Activated T-helper 1 cell treated with anti-CD3 and anti-CD28 coated beads, Interleukin-12 subunit alpha, Interleukin-12 subunit beta, Interleukin-2, Interleukin-4 antibody, amounts not matched to agents 30 ng/mL and 10 ng/mL and 1 ng/mL, durations not matched to agents 14 hours and 24 hours and 36 hours (primary cell): ENCODE measurements at regions of chr12 and their contacts with region 1.

Region 1: GRCh38 chr12:94532490-94533422 is 73.1 kb upstream of the CEP83 start:
- DNase-seq: peak; percentile 59
- H3K4me3 Mint-ChIP-seq: no peak overlapping the region
- H3K27ac Mint-ChIP-seq: no peak overlapping the region
- H3K4me1 Mint-ChIP-seq: peaks cover 17% of the 10 kb centered on the region
- H3K27me3 Mint-ChIP-seq: peaks cover 10% of the 10 kb centered on the region

Region 2: GRCh38 chr12:93502802-93503623 is 1029.7 kb before region 1 on chr12:
- intact Hi-C with region 1: loop called (anchors 2 kb)
- DNase-seq: peak; percentile 42
- H3K4me3 Mint-ChIP-seq: no peak overlapping the region
- H3K27ac Mint-ChIP-seq: no peak overlapping the region
- H3K4me1 Mint-ChIP-seq: peaks cover 32% of the 10 kb centered on the region
- H3K27me3 Mint-ChIP-seq: no peaks in the 10 kb centered on the region

Region 3: DNA sequence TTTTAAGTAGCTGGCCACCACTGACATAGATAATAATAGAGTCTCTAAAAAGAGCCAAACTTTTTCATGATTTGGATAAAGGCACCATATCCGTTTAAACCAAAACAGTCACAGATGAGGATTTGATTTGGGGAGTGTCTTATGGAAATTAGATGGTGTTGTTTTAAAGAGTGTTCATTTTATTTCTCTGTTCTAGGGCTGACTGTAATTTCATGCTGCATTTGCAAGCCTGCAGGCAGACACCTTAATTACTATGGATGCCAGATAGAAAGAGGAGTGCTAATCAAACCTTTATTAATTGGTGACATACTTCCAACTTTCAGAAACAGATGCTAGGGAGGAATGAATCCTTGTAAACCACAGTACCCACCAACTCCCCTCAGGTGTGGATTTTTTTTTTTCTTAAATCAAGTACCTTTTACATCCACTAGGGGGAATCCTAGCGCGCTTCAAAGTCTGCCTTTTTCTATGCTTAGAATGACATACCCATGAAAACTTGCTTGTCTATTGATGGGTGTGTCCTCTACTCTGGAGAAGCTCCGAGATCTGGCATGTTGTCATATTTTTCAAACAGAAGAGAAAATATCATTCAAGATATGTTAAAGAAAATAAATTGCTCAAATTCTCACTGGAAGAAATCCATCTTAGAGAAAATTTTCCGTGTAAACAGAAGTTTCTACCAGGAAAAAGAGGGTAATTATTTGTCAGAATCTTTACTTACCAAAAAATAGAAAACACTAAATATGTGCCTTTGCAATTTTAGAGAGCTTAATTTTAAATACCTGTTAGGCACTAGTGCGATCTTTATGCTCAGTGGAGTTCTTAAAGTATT is 398.6 kb before region 1 on chr12:
- intact Hi-C with region 1: loop called (anchors 1 kb)
- DNase-seq: peak; percentile 24
- H3K4me3 Mint-ChIP-seq: no peak overlapping the region
- H3K27ac Mint-ChIP-seq: no peak overlapping the region
- H3K4me1 Mint-ChIP-seq: peaks cover 6% of the 10 kb centered on the region
- H3K27me3 Mint-ChIP-seq: peaks cover 10% of the 10 kb centered on the region

Region 4: DNA sequence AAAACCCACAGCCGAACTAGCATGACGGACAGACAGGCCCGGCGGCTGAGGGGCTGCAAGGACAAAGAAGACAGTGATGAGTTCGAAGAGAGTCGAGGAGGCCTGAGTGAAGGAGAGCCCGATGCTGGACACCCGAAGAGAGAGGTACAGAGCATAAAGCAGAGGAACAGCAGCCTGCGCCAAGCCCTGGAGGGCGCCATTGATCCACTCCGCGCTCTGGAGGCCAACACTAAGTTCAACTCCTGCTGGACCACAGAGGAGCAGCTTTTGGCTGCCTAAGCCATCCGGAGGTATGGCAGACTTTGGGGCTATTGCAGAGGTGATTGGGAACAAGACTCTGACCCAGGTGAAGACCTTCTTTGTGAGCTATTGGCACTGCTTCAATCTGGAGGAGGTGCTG is 392.2 kb before region 1 on chr12:
- intact Hi-C with region 1: loop called (anchors 1 kb)
- DNase-seq: peak; percentile 40
- H3K4me3 Mint-ChIP-seq: no peak overlapping the region
- H3K27ac Mint-ChIP-seq: no peak overlapping the region
- H3K4me1 Mint-ChIP-seq: peaks cover 8% of the 10 kb centered on the region
- H3K27me3 Mint-ChIP-seq: peaks cover 18% of the 10 kb centered on the region

Region 5: DNA sequence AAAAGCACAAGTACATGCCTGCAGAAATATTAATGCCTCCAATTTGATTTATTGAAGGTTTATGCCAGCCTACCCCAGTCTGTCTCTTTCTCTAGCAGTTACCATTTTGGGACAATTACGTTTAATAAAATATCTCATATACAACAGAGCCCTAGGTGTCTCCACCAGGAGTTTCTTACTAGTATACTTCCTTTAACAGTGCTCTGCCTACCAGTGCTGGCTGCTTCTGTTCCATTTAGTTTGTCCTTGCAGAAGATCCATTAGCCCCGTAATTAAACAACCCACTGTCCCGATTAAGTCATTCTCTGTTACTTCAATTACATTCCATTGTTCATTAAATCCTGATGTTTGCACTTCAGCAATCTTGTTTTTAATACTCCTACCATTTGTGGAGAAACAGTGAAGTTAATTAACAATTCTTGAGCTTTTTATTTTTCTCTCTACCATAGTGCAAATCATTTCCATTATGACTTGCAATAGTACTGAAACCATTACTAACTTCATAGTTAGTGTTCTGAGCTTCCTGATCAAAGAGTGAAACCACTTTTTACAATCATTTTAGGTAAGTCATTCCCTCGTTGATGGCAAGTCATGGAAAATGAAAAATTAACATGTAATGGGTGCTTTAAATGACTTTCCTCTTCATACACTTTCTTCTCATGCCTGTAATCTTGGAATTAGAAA is 263.3 kb before region 1 on chr12:
- intact Hi-C with region 1: loop called (anchors 5 kb)
- DNase-seq: no peak
- H3K4me3 Mint-ChIP-seq: peak overlapping the region; percentile 43
- H3K27ac Mint-ChIP-seq: peak overlapping the region; percentile 72
- H3K4me1 Mint-ChIP-seq: peaks cover 72% of the 10 kb centered on the region
- H3K27me3 Mint-ChIP-seq: no peaks in the 10 kb centered on the region

Region 6: DNA sequence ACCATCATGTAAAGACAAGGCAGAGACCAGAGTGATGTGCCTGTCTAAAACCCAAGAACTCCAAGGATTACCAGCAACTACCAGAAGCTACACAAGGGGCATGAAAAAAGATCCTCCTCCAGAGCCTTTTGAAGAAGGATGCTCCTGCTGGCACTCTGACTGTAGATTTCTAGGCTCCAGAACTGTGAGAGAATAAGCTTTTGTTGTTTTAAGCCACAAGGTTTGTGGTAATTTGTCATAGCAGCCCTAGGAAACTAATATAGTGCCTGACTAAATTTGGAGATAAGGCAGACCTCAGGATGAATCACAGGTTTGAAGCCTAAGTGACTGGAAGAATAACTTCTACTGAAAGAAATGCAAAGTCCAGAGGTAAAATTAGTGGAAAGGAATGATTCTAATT is 206.0 kb before region 1 on chr12:
- intact Hi-C with region 1: loop called (anchors 2 kb)
- DNase-seq: no peak
- H3K4me3 Mint-ChIP-seq: no peak overlapping the region
- H3K27ac Mint-ChIP-seq: peak overlapping the region; percentile 51
- H3K4me1 Mint-ChIP-seq: peaks cover 29% of the 10 kb centered on the region
- H3K27me3 Mint-ChIP-seq: no peaks in the 10 kb centered on the region

Region 7: GRCh38 chr12:94434171-94434570 is 98.6 kb before region 1 on chr12:
- intact Hi-C with region 1: loop called (anchors 5 kb)
- DNase-seq: no peak
- H3K4me3 Mint-ChIP-seq: no peak overlapping the region
- H3K27ac Mint-ChIP-seq: no peak overlapping the region
- H3K4me1 Mint-ChIP-seq: peaks cover 26% of the 10 kb centered on the region
- H3K27me3 Mint-ChIP-seq: no peaks in the 10 kb centered on the region

Region 8: GRCh38 chr12:95838125-95838524 is 1305.4 kb after region 1 on chr12:
- intact Hi-C with region 1: no loop called
- DNase-seq: no peak
- H3K4me3 Mint-ChIP-seq: no peak overlapping the region
- H3K27ac Mint-ChIP-seq: no peak overlapping the region
- H3K4me1 Mint-ChIP-seq: no peaks in the 10 kb centered on the region
- H3K27me3 Mint-ChIP-seq: peaks cover 19% of the 10 kb centered on the region